Mammary epithelial cell (primary cell): ENCODE measurements at regions of chr1 and their contacts with region 1.

Region 1: DNA sequence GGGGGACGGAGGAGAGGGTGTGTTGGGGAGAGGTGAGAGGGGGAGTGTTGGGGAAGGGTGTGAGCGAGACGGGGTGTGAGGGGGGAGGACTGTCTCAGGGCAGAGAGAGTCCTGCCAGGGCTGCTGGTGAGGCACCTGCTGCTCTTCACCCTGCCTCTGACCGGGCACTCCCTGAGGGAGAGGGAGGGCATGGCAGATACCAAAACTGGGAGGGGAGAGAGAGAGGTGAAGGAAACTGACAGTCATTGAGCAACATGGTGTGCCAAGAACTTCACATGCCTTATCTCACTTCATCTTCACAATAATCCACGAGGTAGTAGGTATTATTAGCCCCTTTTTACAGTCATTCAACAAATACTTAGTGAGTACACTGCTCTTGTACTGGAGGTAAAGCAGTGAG is 61.3 kb upstream of the ARTN start:
- DNase-seq: peak; percentile 52
- H3K4me3 ChIP-seq: no peak overlapping the region
- H3K27ac ChIP-seq: no peak overlapping the region
- H3K4me1 ChIP-seq: peaks cover 16% of the 10 kb centered on the region
- H3K27me3 ChIP-seq: no peaks in the 10 kb centered on the region
- CTCF ChIP-seq: no peak

Region 2: GRCh38 chr1:43836267-43836951 is 35.9 kb before region 1 on chr1:
- CTCF ChIA-PET with region 1: no interaction called
- dilution Hi-C with region 1: loop called (anchors 5 kb)
- in situ Hi-C with region 1: no loop called
- intact Hi-C with region 1: no loop called
- DNase-seq: peak; percentile 84
- H3K4me3 ChIP-seq: no peak overlapping the region
- H3K27ac ChIP-seq: peak overlapping the region; percentile 56
- H3K4me1 ChIP-seq: peaks cover 69% of the 10 kb centered on the region
- H3K27me3 ChIP-seq: no peaks in the 10 kb centered on the region
- CTCF ChIP-seq: no peak

Region 3: DNA sequence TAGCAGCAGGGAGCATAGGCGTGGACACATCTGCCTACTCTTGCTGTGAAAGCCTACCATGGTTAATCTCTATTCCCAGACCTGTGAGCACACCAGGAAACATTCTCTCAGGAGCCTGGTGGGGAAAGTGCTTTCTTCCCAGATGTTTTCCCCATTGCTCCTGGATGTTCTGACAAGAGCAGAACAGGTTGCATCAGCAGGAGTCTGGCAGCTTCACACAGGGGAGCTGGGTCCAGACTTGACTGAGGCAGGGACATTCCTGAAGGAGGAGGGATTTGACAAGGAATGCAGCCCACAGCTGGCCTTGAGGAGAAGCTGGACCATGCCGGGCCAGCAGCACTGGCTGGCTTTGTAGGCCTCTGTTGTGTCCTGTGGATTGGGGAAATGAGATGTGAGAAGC is 40.3 kb after region 1 on chr1:
- CTCF ChIA-PET with region 1: no interaction called
- dilution Hi-C with region 1: no loop called
- in situ Hi-C with region 1: no loop called
- intact Hi-C with region 1: no loop called
- DNase-seq: peak; percentile 83
- H3K4me3 ChIP-seq: peak overlapping the region in 1 of 3 experiments; percentile 9
- H3K27ac ChIP-seq: peak overlapping the region; percentile 75
- H3K4me1 ChIP-seq: peaks cover 41% of the 10 kb centered on the region
- H3K27me3 ChIP-seq: no peaks in the 10 kb centered on the region
- CTCF ChIP-seq: no peak